ENCODE measurements at regions of chr16 and their contacts with region 1.

Region 1: DNA sequence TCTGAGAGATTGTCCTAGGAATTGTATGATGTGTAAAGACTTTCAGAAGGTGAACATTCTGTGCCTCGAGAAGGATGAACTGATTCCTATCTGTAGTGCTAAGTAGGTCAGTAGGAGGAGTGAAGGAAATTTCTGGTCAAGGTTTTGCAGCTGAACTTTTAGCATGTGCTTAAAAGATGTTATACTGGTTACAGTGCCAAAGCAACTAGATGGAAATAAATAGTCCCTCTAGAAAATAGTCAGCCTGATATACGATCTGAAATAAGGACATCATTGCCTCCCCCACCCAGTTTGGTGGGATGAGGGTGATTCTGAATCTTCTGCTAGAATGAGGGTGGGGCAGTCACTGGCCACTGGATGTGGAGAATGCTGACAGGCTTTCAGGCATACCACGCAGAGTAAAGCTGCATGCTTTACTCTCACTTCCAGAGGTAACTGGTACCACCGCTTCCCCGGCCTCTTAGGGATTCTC is 57.2 kb upstream of the VPS4A start:
- DNase-seq: no peak
- H3K4me3 ChIP-seq: no peak overlapping the region
- H3K27ac ChIP-seq: peak overlapping the region; percentile 28 to 72 (median 41)
- H3K4me1 ChIP-seq: peaks cover 0 to 6% (median 0%) of the 10 kb centered on the region in 4 donors
- H3K27me3 ChIP-seq: no peaks in the 10 kb centered on the region
- CTCF ChIP-seq: no peak
- EP300 ChIP-seq: no peak
- POLR2A ChIP-seq: no peak

Region 2: DNA sequence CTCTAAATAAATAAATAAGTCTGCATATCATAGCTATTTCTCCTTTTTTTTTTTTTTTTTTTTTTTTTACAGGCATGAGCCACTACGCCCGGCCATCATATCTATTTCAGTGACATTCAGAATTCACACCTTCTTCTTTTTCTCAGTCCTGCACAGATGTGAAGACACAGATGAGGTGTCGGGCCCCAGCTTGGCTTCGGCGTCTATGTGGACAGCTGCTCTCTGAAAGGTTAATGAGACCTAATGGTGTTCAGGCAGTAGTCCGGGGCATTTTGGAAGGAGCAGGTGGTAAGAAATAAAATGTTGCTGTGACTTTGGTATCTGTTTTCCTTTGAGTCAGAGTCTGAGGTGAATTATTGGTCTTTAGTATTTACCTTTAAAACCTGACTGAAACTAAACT is 387.0 kb before region 1 on chr16:
- in situ Hi-C with region 1: loop called in 1 of 4 experiments (anchors 25 kb)
- intact Hi-C with region 1: no loop called
- DNase-seq: no peak
- H3K4me3 ChIP-seq: no peak overlapping the region
- H3K27ac ChIP-seq: no peak overlapping the region
- H3K4me1 ChIP-seq: no peaks in the 10 kb centered on the region
- H3K27me3 ChIP-seq: no peaks in the 10 kb centered on the region
- CTCF ChIP-seq: no peak
- EP300 ChIP-seq: no peak
- POLR2A ChIP-seq: no peak

Region 3: GRCh38 chr16:69123910-69124309 is 130.0 kb before region 1 on chr16:
- in situ Hi-C with region 1: no loop called
- intact Hi-C with region 1: no loop called
- DNase-seq: peak; percentile 60
- H3K4me3 ChIP-seq: no peak overlapping the region
- H3K27ac ChIP-seq: no peak overlapping the region
- H3K4me1 ChIP-seq: peaks cover 0 to 10% (median 3%) of the 10 kb centered on the region in 4 donors
- H3K27me3 ChIP-seq: no peaks in the 10 kb centered on the region
- CTCF ChIP-seq: peak; percentile 63 to 82 (median 65)
- EP300 ChIP-seq: no peak
- POLR2A ChIP-seq: no peak

Region 4: DNA sequence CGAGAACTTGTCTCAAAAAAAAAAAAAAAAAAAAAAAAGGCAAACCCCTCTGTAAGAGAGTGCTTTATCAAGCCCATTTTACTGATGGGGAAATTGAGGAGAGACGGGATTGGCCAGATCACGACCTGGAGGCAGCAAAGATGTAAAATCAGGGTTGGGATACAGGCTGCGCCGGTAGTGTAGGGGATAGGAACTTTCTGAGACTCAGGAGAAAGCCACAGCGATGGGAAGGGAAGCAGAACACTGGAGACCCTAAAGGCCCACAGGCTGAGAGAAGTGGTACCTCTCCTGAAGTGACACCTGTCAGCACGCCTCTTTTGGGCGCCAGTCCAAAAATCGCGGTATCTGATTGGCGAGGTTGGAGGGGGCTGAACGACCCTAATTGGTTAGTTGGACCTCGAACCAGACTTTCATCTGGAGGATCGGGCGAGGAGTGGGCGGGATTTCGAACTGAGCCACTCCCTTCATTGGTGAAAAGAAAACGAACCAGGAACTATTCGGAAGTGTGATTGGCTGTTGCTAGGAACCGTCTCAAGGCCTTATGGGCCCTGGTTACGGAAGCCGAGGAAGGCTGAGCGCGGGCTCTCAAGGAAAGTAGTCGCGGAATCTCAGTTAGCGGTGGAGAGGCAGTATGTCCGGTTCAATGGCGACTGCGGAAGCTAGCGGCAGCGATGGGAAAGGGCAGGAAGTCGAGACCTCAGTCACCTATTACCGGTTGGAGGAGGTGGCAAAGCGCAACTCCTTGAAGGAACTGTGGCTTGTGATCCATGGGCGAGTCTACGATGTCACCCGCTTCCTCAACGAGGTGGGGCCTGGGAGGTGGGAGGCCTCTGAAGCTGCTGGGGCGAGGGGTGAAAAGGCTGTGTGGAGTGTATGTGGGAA is 170.4 kb after region 1 on chr16 and contains the start of gene CYB5B:
- in situ Hi-C with region 1: no loop called
- intact Hi-C with region 1: no loop called
- DNase-seq: peak; percentile 96
- H3K4me3 ChIP-seq: peak within 1 kb of the TSS; percentile 67 to 85 (median 74)
- H3K27ac ChIP-seq: peak within 1 kb of the TSS; percentile 87 to 91 (median 88)
- H3K4me1 ChIP-seq: peaks cover 0 to 13% (median 11%) of the 10 kb centered on the region in 4 donors
- H3K27me3 ChIP-seq: no peaks in the 10 kb centered on the region
- CTCF ChIP-seq: peak in 2 of 5 experiments; percentile 45 to 55
- EP300 ChIP-seq: no peak
- POLR2A ChIP-seq: peak; percentile 93
- total RNA-seq, gene CYB5B: 30.3 to 60.5 (median 42.4) TPM

Region 5: GRCh38 chr16:69482410-69482991 is 228.6 kb after region 1 on chr16:
- in situ Hi-C with region 1: no loop called
- intact Hi-C with region 1: no loop called
- DNase-seq: no peak
- H3K4me3 ChIP-seq: no peak overlapping the region
- H3K27ac ChIP-seq: peak overlapping the region; percentile 45 to 73 (median 64)
- H3K4me1 ChIP-seq: peaks cover 0 to 7% (median 0%) of the 10 kb centered on the region in 4 donors
- H3K27me3 ChIP-seq: no peaks in the 10 kb centered on the region
- CTCF ChIP-seq: no peak
- EP300 ChIP-seq: no peak
- POLR2A ChIP-seq: no peak